A549 (cell line): ENCODE measurements at regions of chr5 and their contacts with region 1.

Region 1: DNA sequence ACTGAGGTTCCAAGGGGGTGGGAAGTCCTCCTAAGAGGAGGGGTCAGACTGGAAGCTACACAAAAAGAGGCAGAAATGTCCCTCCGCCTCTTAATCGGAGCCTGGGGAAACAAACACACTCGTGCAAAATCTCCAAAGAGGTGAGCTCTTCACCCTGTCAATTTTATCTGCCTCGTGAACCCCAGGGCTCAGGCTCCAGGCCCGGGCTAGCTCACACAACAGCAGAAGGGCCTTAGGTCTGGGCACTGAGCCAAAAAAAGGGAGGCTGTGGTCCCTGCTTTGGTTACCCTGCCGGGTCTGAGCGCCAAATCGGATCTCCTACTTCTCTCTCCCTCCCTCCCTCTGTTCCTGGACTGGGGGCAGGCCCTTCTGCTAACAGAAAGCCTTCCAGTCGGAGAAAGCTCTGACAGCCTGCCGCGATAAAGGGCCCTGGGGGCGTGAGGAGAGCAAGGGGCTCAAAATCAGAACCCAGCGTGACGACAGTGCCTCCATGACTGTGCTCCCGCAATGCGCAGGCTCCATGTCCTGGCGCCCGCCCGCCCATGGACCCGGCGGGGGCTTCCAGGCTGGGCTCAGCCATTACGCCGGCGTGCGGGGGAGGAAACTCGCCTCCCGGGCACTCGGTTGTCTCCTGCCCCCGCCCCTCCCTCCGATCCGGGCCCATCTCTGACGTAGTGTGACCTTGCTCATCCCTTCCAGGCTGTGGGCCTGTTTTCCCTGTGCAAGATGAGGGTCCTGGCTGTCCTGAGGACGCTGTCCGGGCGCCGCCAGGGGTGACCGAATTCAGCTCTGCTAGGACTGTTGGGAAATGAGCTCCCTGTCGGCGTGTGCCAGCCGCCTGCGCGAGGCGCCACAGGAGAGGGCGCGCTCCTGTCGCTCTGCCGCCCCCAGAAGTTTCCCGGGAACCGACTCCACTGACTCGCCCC is 865 bp upstream of the SLC22A4 start:
- DNase-seq: peak; percentile 91
- ATAC-seq: peak; percentile 67 to 74
- H3K4me3 ChIP-seq: peak overlapping the region; percentile 65
- H3K27ac ChIP-seq: peak overlapping the region; percentile 95 to 99
- H3K4me1 ChIP-seq: peaks cover 30% of the 10 kb centered on the region
- CTCF ChIP-seq: peak; percentile 20; the same call in 1 of the 3 replicates
- EP300 ChIP-seq: 0 out of 5 replicates have a peak, but pooled peaks of 1 of the 2 experiments have one; percentile 14
- POLR2A ChIP-seq: peak; percentile 94
- RAD21 ChIP-seq: no peak

Region 2: GRCh38 chr5:131932235-131932634 is 361.1 kb before region 1 on chr5:
- CTCF ChIA-PET with region 1: no interaction called
- POLR2A ChIA-PET with region 1: no interaction called
- DNase-seq: no peak
- ATAC-seq: no peak
- H3K4me3 ChIP-seq: no peak overlapping the region
- H3K27ac ChIP-seq: no peak overlapping the region
- H3K4me1 ChIP-seq: no peaks in the 10 kb centered on the region
- CTCF ChIP-seq: no peak
- EP300 ChIP-seq: no peak
- POLR2A ChIP-seq: no peak
- RAD21 ChIP-seq: no peak

Region 3: DNA sequence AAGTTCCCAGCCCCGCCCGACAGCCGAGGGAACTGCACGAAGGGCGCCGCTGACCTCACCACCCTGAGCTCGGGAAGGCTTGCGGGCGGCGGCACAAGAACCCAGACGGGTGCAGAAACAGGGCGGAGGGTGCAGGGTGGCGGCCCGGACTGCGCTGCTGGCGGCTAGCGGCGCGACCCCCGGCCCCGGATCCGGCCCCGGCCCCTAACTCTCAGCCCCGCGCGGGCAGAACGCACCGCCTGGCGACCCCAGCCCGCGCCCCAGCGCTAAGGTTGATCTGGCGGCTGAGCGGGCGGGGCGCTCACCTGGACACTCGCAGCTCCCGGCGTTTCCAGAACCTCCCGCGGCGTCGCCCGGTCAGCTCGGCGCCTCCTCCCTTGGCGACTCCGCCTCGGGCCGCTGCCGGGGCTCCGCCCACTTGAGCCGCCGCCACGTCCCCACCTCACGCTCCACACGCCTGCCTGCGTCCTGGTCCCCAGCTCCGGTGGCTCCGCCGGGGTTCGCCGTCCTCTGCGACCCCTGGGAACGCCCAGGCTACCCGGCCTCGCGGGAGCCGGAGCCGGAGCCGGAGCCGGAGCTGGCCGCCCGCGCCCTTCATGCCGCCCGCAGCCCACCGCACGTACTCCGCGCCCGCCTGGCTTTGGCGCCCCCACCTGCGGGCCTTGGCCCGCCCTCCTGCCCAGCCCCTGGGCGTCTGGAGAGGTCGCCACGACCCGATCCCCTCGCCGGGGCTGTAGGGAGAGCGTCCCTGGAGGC is 65.7 kb before region 1 on chr5 and contains the start of gene P4HA2:
- CTCF ChIA-PET with region 1: interaction called, 3 read pairs
- POLR2A ChIA-PET with region 1: interaction called, 14 read pairs
- DNase-seq: peak; percentile 68 to 78
- ATAC-seq: peak; percentile 90 to 95
- H3K4me3 ChIP-seq: peak within 1 kb of the TSS; percentile 77
- H3K27ac ChIP-seq: peak within 1 kb of the TSS; percentile 92 to 98
- H3K4me1 ChIP-seq: peaks cover 21% of the 10 kb centered on the region; the same call in 2 of the 3 replicates
- CTCF ChIP-seq: no peak; the same call in 2 of the 3 replicates
- EP300 ChIP-seq: no peak
- POLR2A ChIP-seq: peak; percentile 78
- RAD21 ChIP-seq: no peak
- polyA plus RNA-seq, gene P4HA2: 45.0 and 64.9 TPM in 2 replicates

Region 4: GRCh38 chr5:132363431-132364112 is 70.2 kb after region 1 on chr5:
- CTCF ChIA-PET with region 1: interaction called, 4 read pairs
- POLR2A ChIA-PET with region 1: interaction called, 81 read pairs
- DNase-seq: peak; percentile 70 to 90
- ATAC-seq: peak; percentile 76 to 88
- H3K4me3 ChIP-seq: peak overlapping the region; percentile 26; the same call in 1 of the 3 replicates
- H3K27ac ChIP-seq: peak overlapping the region; percentile 92 to 94
- H3K4me1 ChIP-seq: peaks cover 67% of the 10 kb centered on the region
- CTCF ChIP-seq: no peak
- EP300 ChIP-seq: peak in 1 of 2 experiments; percentile 64; a peak in 2 of 5 replicates
- POLR2A ChIP-seq: no peak
- RAD21 ChIP-seq: no peak

Region 5: GRCh38 chr5:132369474-132370180 is 76.3 kb after region 1 on chr5 and contains the start of gene SLC22A5:
- CTCF ChIA-PET with region 1: interaction called, 4 read pairs
- POLR2A ChIA-PET with region 1: interaction called, 81 read pairs
- DNase-seq: peak; percentile 62 to 84
- ATAC-seq: peak; percentile 82 to 85
- H3K4me3 ChIP-seq: peak within 1 kb of the TSS; percentile 87
- H3K27ac ChIP-seq: peak within 1 kb of the TSS; percentile 92 to 93
- H3K4me1 ChIP-seq: peaks cover 68% of the 10 kb centered on the region
- CTCF ChIP-seq: no peak
- EP300 ChIP-seq: no peak
- POLR2A ChIP-seq: peak; percentile 65
- RAD21 ChIP-seq: no peak; a peak in 1 of 5 replicates
- polyA plus RNA-seq, gene SLC22A5: 35.3 and 44.8 TPM in 2 replicates